ENCODE measurements at regions of chr1 and their contacts with region 1.

Region 1: GRCh38 chr1:25848531-25848930 is 10.7 kb downstream of the AUNIP start:
- DNase-seq: no peak
- H3K4me3 Mint-ChIP-seq: no peak overlapping the region
- H3K27ac Mint-ChIP-seq: peak overlapping the region; percentile 14
- H3K4me1 Mint-ChIP-seq: peaks cover 17% of the 10 kb centered on the region
- H3K27me3 Mint-ChIP-seq: no peaks in the 10 kb centered on the region
- CTCF ChIP-seq: no peak

Region 2: GRCh38 chr1:25858906-25859789 is 10.6 kb after region 1 on chr1 and contains the start of gene AUNIP:
- CTCF ChIA-PET with region 1: interaction called, 4 read pairs
- POLR2A ChIA-PET with region 1: interaction called, 15 read pairs
- intact Hi-C with region 1: no loop called
- DNase-seq: peak; percentile 86
- H3K4me3 Mint-ChIP-seq: peak within 1 kb of the TSS; percentile 97
- H3K27ac Mint-ChIP-seq: peak within 1 kb of the TSS; percentile 93
- H3K4me1 Mint-ChIP-seq: peaks cover 23% of the 10 kb centered on the region
- H3K27me3 Mint-ChIP-seq: no peaks in the 10 kb centered on the region
- CTCF ChIP-seq: no peak
- total RNA-seq, gene AUNIP: 5.2 and 9.4 TPM in 2 replicates

Measured in MCF 10A (cell line).